MCF 10A (cell line): ENCODE measurements at regions of chr11 and their contacts with region 1.

Region 1: DNA sequence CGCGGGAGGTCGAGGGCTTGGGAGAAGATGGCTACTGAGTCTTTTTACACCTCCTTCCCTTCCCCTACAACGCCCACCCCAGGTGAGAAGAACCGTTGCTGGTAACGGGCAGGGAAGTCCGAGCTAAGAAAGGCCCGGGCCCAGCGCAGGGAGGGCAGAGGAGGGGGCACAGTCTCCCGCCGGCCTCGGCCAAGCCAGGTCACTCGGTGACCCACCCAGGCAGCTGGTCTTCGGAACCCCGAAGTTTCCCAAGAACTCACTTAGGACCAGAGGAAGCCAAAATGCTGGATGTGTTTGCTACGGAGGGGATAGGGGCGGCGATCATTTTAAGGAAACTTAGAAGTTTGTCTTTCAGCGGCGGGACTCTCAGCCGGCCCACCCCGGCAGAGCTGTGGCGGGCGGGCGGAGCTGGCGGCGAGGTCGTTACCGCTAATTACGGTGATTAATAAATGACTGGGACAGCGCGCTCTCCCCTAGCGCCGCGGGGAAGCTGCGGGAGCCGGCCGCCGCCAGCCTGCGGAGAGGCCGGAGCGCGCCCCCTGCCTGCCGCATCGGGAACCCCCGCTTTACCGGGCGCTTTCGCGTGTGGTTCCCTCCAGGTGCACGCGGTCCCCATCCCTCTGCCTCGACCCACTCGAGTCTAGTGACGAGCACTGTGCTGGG is 820 bp downstream of the ROBO3 start:
- DNase-seq: peak; percentile 13
- H3K4me3 Mint-ChIP-seq: peak overlapping the region; percentile 47
- H3K27ac Mint-ChIP-seq: no peak overlapping the region
- H3K4me1 Mint-ChIP-seq: no peaks in the 10 kb centered on the region
- H3K27me3 Mint-ChIP-seq: peaks cover 88% of the 10 kb centered on the region
- CTCF ChIP-seq: peak; percentile 80

Region 2: DNA sequence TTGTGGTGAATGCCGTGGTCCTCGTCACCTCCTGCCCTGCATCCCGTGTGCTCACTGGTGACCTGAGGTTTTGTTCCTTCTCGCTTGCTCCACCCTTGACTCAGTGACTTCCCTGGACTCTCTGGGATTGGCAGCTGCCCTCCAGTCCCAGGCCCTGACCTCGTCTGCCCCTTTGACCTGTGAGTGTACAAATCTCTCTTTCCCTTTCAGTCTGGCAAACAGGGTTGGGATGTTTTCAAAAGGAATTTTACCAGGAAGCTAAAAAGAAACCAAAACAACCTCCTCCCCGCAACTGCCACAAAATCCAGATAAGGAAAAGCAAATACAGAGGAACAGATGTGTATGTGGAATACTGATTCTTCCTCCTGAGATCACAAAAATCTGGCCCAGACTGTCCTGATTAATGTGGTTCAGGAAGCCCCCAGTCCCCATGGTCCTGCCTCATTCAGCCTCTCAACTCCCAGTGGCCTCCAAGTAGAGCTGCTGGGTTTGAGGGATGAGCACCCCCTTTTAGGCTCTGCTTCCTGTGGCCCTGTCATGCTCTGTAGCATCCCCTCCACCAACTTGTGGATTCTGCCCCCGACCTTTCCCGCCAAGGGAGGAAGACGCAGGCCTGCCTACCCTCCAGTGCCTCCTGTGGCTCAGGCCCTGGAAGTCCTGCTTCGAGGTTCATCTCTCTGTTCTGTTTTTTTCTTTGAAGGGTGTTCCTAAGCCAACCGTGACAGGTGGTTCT is 16.5 kb after region 1 on chr11:
- CTCF ChIA-PET with region 1: interaction called, 11 read pairs
- POLR2A ChIA-PET with region 1: no interaction called
- intact Hi-C with region 1: no loop called
- DNase-seq: no peak
- H3K4me3 Mint-ChIP-seq: no peak overlapping the region
- H3K27ac Mint-ChIP-seq: no peak overlapping the region
- H3K4me1 Mint-ChIP-seq: peaks cover 12% of the 10 kb centered on the region
- H3K27me3 Mint-ChIP-seq: no peaks in the 10 kb centered on the region
- CTCF ChIP-seq: no peak

Region 3: DNA sequence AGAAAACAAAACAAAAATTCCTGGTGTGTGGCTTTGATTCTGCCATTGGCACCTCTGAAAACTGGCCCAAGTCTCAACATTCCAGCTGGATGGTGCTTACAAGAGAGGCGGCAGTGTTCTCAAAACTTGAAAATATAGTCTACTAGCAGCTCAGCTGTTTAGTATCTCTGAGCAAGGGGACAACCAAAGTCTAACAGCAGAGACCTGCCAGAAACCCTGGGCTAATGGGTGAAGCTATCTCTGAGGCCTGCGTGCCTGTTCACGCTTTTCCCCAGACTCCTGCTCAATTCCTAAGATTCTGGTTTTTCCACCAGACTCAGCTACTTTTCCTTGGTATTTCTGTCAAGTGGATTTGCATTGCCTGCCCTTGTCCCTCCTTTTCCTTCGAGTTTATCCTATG is 227.4 kb after region 1 on chr11:
- CTCF ChIA-PET with region 1: no interaction called
- POLR2A ChIA-PET with region 1: no interaction called
- intact Hi-C with region 1: no loop called
- DNase-seq: no peak
- H3K4me3 Mint-ChIP-seq: no peak overlapping the region
- H3K27ac Mint-ChIP-seq: no peak overlapping the region
- H3K4me1 Mint-ChIP-seq: peaks cover 8% of the 10 kb centered on the region
- H3K27me3 Mint-ChIP-seq: no peaks in the 10 kb centered on the region
- CTCF ChIP-seq: no peak